Activated CD4-positive, alpha-beta memory T cell treated with anti-CD3 and anti-CD28 coated beads, Interleukin-2, amount 10 ng/mL, durations not matched to agents 7 days and 5 days (primary cell): ENCODE measurements at regions of chr19 and their contacts with region 1.

Region 1: DNA sequence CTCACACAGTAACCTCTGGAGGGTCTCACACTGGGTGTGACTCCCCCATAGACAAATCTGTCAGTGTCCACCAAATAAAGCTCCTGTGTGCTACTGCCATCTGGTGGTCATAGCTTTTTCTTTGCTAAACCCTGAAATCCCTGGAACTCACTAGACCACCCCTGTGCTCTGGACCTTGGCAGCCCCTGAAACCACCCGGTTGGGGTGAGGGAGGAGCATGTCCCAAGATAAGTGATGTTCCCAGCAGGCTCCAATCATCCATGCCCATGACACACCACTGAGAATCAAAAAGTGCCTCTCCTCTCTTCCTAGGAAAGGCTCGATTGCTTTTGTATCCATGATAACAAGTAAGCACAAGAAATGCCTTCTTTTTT is 6.5 kb upstream of the HSD17B14 start:
- DNase-seq: peak; percentile 49
- H3K4me3 Mint-ChIP-seq: no peak overlapping the region
- H3K27ac Mint-ChIP-seq: no peak overlapping the region
- H3K4me1 Mint-ChIP-seq: peaks cover under 1% of the 10 kb centered on the region
- H3K27me3 Mint-ChIP-seq: no peaks in the 10 kb centered on the region

Region 2: DNA sequence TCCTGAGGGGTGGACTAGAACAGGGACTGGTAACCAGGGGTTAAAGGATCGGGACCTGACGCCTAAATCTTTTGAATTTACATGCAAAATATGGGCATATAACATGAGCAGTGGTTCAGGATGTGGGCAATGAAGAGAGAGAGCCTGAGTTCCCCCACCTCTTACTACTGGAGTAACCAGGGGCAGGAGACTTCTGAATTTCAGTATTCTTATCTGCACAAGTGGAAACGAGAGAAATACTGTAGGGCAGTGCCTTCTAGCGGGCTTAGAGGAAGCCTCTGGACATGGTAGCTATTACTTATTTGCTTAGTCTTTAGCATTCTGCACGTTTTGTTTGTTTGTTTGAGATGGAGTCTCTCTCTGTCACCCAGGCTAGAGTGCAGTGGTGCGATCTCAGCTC is 58.2 kb before region 1 on chr19:
- CTCF ChIA-PET with region 1: interaction called, 109 read pairs
- POLR2A ChIA-PET with region 1: interaction called, 10 read pairs
- DNase-seq: no peak
- H3K4me3 Mint-ChIP-seq: no peak overlapping the region
- H3K27ac Mint-ChIP-seq: no peak overlapping the region
- H3K4me1 Mint-ChIP-seq: peaks cover 3% of the 10 kb centered on the region
- H3K27me3 Mint-ChIP-seq: peaks cover 14% of the 10 kb centered on the region

Region 3: DNA sequence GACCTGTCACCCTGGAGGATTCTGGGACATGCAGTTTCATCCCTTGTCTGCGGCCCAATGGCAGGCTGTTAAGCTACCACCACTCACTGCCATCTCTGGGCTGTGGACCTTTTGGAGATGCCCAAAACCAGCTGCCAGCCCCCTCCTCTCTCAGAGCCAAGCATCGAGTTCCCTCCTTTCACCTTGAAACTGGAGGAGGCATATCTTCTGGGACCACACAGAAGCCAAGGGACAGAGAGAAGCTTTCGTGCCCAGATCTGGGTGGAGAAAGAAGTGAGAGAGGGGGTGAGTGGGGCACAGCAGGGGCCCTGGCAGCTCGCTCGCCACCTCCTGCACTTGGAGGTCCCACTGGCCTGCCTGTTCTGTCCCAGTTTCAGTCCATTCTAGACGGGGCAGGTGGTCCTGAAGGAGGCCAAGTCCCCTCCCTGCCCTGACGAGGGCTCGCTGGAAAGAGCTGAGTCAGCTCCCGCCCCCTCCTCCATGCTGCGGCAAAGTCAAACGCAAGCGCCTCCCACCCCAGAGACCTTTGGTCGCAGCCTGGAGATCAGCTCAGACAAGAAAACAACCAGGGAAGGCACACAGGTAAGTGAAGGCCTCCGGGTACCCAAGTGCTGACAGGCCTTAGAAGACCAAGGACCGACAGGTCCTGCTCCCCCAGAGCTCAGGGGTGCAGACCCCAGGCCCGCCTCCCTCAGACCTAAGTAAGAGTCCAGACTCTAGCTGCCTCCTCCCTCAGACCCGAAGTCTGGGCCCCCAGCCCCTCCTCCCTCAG is 35.8 kb before region 1 on chr19:
- CTCF ChIA-PET with region 1: interaction called, 11 read pairs
- POLR2A ChIA-PET with region 1: no interaction called
- DNase-seq: no peak
- H3K4me3 Mint-ChIP-seq: no peak overlapping the region
- H3K27ac Mint-ChIP-seq: no peak overlapping the region
- H3K4me1 Mint-ChIP-seq: peaks cover 25% of the 10 kb centered on the region
- H3K27me3 Mint-ChIP-seq: no peaks in the 10 kb centered on the region

Region 4: GRCh38 chr19:48826606-48827020 is 16.2 kb before region 1 on chr19:
- CTCF ChIA-PET with region 1: interaction called, 19 read pairs
- POLR2A ChIA-PET with region 1: no interaction called
- DNase-seq: no peak
- H3K4me3 Mint-ChIP-seq: no peak overlapping the region
- H3K27ac Mint-ChIP-seq: no peak overlapping the region
- H3K4me1 Mint-ChIP-seq: no peaks in the 10 kb centered on the region
- H3K27me3 Mint-ChIP-seq: peaks cover 2% of the 10 kb centered on the region

Region 5: DNA sequence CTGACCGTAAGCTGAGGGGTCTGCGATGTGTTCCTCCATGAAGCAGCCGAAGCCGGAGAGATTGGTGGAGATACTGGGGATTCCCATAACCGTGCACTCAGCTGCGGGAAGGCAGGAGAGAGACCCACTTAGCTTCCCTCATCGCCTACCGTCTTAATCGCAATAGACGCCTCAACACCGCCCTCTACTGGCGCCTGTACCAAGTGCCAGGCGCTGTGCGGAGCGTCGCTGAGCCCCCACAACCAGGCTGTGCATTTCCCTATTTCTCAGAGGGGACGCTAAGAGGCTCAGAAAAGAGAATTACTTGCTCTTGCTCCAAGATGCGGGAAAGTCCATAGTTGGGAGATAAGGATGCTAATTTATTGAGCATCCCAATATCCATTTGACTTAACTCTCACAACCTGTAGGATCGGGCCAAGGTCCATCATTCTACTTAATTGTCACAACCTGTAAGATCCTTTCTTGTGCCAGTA is 128.2 kb after region 1 on chr19:
- CTCF ChIA-PET with region 1: interaction called, 28 read pairs
- POLR2A ChIA-PET with region 1: interaction called, 5 read pairs
- DNase-seq: peak; percentile 81
- H3K4me3 Mint-ChIP-seq: no peak overlapping the region
- H3K27ac Mint-ChIP-seq: no peak overlapping the region
- H3K4me1 Mint-ChIP-seq: peaks cover 27% of the 10 kb centered on the region
- H3K27me3 Mint-ChIP-seq: no peaks in the 10 kb centered on the region